Activated CD4-positive, alpha-beta memory T cell treated with anti-CD3 and anti-CD28 coated beads, Interleukin-2, amount 10 ng/mL, durations not matched to agents 7 days and 5 days (primary cell): ENCODE measurements at regions of chr5 and their contacts with region 1.

Region 1: GRCh38 chr5:146965761-146966659 is 87.5 kb upstream of the PPP2R2B start:
- DNase-seq: peak; percentile 47
- H3K4me3 Mint-ChIP-seq: no peak overlapping the region
- H3K27ac Mint-ChIP-seq: no peak overlapping the region
- H3K4me1 Mint-ChIP-seq: no peaks in the 10 kb centered on the region
- H3K27me3 Mint-ChIP-seq: no peaks in the 10 kb centered on the region

Region 2: DNA sequence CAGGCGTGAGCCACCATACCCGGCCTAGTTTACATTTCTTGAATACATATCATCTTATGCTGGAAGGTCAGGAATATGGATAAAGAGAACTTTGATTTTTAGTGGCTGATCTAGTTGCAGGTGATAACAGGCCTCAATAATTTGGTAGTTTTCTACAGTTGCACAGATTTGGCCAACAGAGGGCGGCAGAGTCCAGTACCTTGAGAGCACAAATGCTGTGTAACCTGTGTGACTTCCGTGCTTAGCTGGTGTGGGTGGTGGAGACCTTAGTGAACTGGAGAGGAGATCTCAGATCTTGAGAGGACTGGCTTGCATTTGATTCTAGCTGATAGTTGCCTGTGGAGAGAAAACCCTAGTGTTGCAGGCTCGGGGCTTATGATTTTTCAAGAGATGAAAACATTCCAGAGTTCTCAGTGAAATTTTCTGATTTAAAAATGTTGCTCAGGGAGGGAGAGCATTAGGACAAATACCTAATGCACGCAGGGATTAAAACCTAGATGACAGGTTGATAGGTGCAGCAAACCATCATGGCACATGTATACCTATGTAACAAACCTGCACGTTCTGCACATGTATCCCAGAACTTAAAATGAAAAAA is 432.7 kb before region 1 on chr5:
- CTCF ChIA-PET with region 1: interaction called, 24 read pairs
- POLR2A ChIA-PET with region 1: no interaction called
- DNase-seq: peak; percentile 78
- H3K4me3 Mint-ChIP-seq: no peak overlapping the region
- H3K27ac Mint-ChIP-seq: no peak overlapping the region
- H3K4me1 Mint-ChIP-seq: peaks cover 11% of the 10 kb centered on the region
- H3K27me3 Mint-ChIP-seq: peaks cover under 1% of the 10 kb centered on the region

Region 3: DNA sequence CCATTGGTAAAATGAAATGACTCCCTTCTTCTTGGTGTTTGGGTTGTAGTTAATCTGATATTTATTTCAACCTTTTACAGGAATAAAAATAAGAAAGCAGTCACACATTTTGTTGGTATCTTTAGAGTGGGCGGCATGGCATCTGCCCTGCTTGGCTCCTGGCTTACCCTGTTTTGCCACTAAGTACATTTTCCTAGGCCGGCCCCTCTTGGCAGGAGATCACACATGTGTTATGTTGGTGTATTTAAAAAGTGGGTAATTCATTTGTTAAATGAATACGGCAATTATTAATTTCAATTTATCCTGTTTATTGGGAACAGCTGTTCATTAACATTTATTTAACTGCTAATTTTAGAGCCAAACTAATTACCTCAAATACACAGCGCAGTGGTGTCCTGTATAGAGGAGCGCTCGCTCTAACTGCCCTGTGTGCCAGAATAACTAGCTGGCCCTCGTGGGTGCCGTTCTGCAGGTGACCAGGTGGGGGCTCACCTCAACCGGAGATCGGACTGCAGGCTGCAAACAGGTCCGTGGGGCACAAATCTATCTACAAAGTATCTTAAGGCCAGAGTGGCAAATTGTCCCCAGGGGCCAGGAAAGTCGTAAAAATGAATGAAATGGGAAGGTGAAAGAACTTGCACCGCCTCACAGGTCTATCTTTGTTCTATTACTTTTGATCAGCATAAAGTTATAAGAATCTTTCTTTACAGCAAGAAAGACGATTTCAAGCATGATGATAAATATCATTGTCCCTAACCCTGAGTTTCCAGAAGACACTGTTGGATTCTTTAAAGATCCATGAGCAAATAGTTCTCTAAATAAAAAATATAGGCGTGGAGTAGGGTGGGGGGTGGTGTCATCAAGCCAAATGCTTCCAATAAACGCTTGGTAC is 423.8 kb before region 1 on chr5:
- CTCF ChIA-PET with region 1: interaction called, 63 read pairs
- POLR2A ChIA-PET with region 1: no interaction called
- DNase-seq: peak; percentile 71
- H3K4me3 Mint-ChIP-seq: no peak overlapping the region
- H3K27ac Mint-ChIP-seq: no peak overlapping the region
- H3K4me1 Mint-ChIP-seq: no peaks in the 10 kb centered on the region
- H3K27me3 Mint-ChIP-seq: peaks cover 2% of the 10 kb centered on the region

Region 4: GRCh38 chr5:146548781-146549449 is 417.1 kb before region 1 on chr5:
- CTCF ChIA-PET with region 1: interaction called, 10 read pairs
- POLR2A ChIA-PET with region 1: no interaction called
- DNase-seq: no peak
- H3K4me3 Mint-ChIP-seq: no peak overlapping the region
- H3K27ac Mint-ChIP-seq: no peak overlapping the region
- H3K4me1 Mint-ChIP-seq: no peaks in the 10 kb centered on the region
- H3K27me3 Mint-ChIP-seq: peaks cover 4% of the 10 kb centered on the region

Region 5: GRCh38 chr5:146565764-146566367 is 400.1 kb before region 1 on chr5:
- CTCF ChIA-PET with region 1: interaction called, 28 read pairs
- POLR2A ChIA-PET with region 1: no interaction called
- DNase-seq: peak; percentile 50
- H3K4me3 Mint-ChIP-seq: no peak overlapping the region
- H3K27ac Mint-ChIP-seq: no peak overlapping the region
- H3K4me1 Mint-ChIP-seq: peaks cover 3% of the 10 kb centered on the region
- H3K27me3 Mint-ChIP-seq: no peaks in the 10 kb centered on the region

Region 6: GRCh38 chr5:146662229-146662628 is 303.8 kb before region 1 on chr5:
- CTCF ChIA-PET with region 1: interaction called, 36 read pairs
- POLR2A ChIA-PET with region 1: no interaction called
- DNase-seq: no peak
- H3K4me3 Mint-ChIP-seq: no peak overlapping the region
- H3K27ac Mint-ChIP-seq: no peak overlapping the region
- H3K4me1 Mint-ChIP-seq: no peaks in the 10 kb centered on the region
- H3K27me3 Mint-ChIP-seq: no peaks in the 10 kb centered on the region

Region 7: GRCh38 chr5:147081311-147081764 is 115.3 kb after region 1 on chr5:
- CTCF ChIA-PET with region 1: no interaction called
- POLR2A ChIA-PET with region 1: no interaction called
- DNase-seq: no peak
- H3K4me3 Mint-ChIP-seq: no peak overlapping the region
- H3K27ac Mint-ChIP-seq: no peak overlapping the region
- H3K4me1 Mint-ChIP-seq: no peaks in the 10 kb centered on the region
- H3K27me3 Mint-ChIP-seq: no peaks in the 10 kb centered on the region